ENCODE measurements at regions of chr12 and their contacts with region 1.

Region 1: GRCh38 chr12:3299929-3300832 is 190.8 kb upstream of the PRMT8 start:
- DNase-seq: peak; percentile 85 to 93
- H3K4me3 ChIP-seq: peak overlapping the region in 3 of 4 experiments; percentile 7 to 42 (median 11); a peak in 3 of 8 replicates
- H3K27ac ChIP-seq: no peak overlapping the region
- H3K4me1 ChIP-seq: peaks cover 0 to 13% (median 4%) of the 10 kb centered on the region in 4 experiments; a peak in 5 of 7 replicates
- H3K27me3 ChIP-seq: peaks cover 0 to 4% (median 2%) of the 10 kb centered on the region in 4 experiments; a peak in 2 of 7 replicates
- CTCF ChIP-seq: peak in 2 of 3 experiments; percentile 97 to 98; a peak in 3 of 4 replicates
- EP300 ChIP-seq: peak in 1 of 2 experiments; percentile 33; a peak in 1 of 3 replicates
- POLR2A ChIP-seq: no peak
- RAD21 ChIP-seq: peak; percentile 93 to 98

Region 2: DNA sequence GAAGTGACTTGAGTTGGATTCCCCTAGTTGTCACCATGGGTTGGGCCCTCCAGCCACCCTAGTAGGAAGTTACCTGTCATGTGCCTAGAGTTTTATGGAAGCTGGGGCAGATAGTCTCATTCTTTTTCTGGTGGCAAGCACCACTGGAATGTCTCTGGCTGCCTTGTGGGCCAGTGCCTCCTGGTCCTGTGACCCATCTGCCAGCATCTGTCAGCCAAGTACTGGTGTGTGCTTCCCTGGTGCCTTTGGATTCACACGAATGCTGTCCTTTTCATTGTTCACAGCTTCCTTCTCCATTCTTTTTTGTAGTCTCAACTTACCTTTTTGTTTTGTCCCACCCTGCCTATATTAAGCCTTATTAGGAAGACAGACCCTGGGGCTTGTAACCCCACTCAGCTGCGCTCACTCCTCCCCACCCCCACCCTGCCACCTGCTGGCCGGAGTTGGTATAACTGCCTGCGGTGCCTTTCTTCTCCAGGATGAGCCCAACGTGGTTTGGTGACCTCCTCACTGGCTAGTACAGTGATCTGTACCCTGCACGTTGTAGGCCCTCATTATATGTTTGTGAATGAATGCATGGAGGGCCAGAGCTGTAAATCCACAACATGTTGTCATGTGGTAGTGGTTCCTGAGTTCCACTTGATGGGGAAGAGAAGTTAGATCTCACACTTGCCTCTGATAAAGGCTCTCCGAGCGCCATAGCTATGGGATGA is 97.3 kb before region 1 on chr12:
- CTCF ChIA-PET with region 1: interaction called, 20 read pairs
- POLR2A ChIA-PET with region 1: no interaction called
- DNase-seq: peak in 1 of 2 experiments; percentile 93
- H3K4me3 ChIP-seq: no peak overlapping the region
- H3K27ac ChIP-seq: no peak overlapping the region
- H3K4me1 ChIP-seq: peaks cover 3 to 16% (median 10%) of the 10 kb centered on the region in 4 experiments
- H3K27me3 ChIP-seq: peaks cover 10 to 43% (median 32%) of the 10 kb centered on the region in 4 experiments
- CTCF ChIP-seq: peak; percentile 92 to 94 (median 93)
- EP300 ChIP-seq: no peak
- POLR2A ChIP-seq: no peak
- RAD21 ChIP-seq: peak; percentile 65 to 77

Region 3: DNA sequence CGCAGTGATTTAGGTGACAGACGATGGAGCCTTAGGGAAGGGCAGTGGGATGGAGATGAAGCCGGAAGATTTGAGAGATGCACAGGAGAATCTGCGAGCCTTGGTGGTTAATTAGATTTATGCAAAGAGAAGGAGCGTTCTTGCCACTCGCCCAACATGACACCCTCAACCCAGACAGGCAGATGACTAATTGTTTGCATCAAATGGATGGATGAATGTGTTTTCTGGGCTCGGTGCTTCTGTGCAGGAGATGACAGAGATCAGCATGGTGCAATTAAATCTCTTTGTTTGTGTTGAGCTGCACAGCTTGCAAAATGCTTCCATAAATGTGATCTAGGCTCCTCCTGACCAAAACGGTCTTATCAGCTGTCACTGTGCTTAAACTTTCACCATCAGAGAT is 11.5 kb before region 1 on chr12:
- CTCF ChIA-PET with region 1: interaction called, 66 read pairs
- POLR2A ChIA-PET with region 1: interaction called, 3 read pairs
- DNase-seq: no peak
- H3K4me3 ChIP-seq: no peak overlapping the region
- H3K27ac ChIP-seq: no peak overlapping the region
- H3K4me1 ChIP-seq: peaks cover 0 to 5% (median 2%) of the 10 kb centered on the region in 4 experiments; a peak in 4 of 7 replicates
- H3K27me3 ChIP-seq: no peaks in the 10 kb centered on the region
- CTCF ChIP-seq: no peak
- EP300 ChIP-seq: no peak
- POLR2A ChIP-seq: no peak
- RAD21 ChIP-seq: no peak

Region 4: DNA sequence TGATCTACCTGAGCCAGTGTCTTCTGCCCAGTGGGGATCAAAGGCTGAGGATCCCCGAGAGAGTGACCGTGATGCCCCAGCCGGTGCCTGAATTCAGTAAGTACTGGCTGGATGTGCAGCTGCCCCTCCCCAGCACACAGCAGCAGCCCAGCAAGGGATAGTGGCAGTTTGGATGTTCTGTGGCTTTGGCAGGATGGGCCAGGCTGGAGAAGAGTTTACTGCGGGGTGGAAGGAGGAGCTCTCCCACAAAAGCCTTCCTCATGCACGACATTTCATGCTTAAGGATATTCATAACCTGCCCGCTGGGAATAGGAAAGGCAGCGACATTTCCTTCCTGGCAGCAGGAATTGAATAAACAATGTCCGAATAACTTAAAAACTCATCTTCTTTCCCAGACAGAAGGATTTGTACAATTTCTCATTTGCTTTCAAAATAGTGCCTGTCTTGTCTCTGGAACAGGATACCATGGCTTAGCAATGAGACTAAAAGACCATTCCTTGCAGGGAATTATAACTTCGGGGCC is 55.3 kb after region 1 on chr12:
- CTCF ChIA-PET with region 1: interaction called, 12 read pairs
- POLR2A ChIA-PET with region 1: no interaction called
- DNase-seq: no peak
- H3K4me3 ChIP-seq: no peak overlapping the region
- H3K27ac ChIP-seq: no peak overlapping the region
- H3K4me1 ChIP-seq: no peaks in the 10 kb centered on the region; a peak in 1 of 7 replicates
- H3K27me3 ChIP-seq: no peaks in the 10 kb centered on the region
- CTCF ChIP-seq: no peak
- EP300 ChIP-seq: no peak
- POLR2A ChIP-seq: no peak
- RAD21 ChIP-seq: no peak

Region 5: GRCh38 chr12:3483089-3483488 is 182.9 kb after region 1 on chr12:
- CTCF ChIA-PET with region 1: interaction called, 12 read pairs
- POLR2A ChIA-PET with region 1: no interaction called
- DNase-seq: no peak
- H3K4me3 ChIP-seq: no peak overlapping the region
- H3K27ac ChIP-seq: no peak overlapping the region
- H3K4me1 ChIP-seq: peaks cover 0 to 5% (median 0%) of the 10 kb centered on the region in 4 experiments; a peak in 1 of 7 replicates
- H3K27me3 ChIP-seq: peaks cover 0 to 3% (median 1%) of the 10 kb centered on the region in 4 experiments; a peak in 4 of 7 replicates
- CTCF ChIP-seq: peak; percentile 16 to 42 (median 39); a peak in 3 of 4 replicates
- EP300 ChIP-seq: no peak
- POLR2A ChIP-seq: no peak
- RAD21 ChIP-seq: peak; percentile 18 to 34; a peak in 2 of 4 replicates

Region 6: GRCh38 chr12:3604748-3605586 is 304.8 kb after region 1 on chr12:
- CTCF ChIA-PET with region 1: interaction called, 22 read pairs
- POLR2A ChIA-PET with region 1: interaction called, 3 read pairs
- DNase-seq: peak; percentile 31 to 60
- H3K4me3 ChIP-seq: peak overlapping the region; percentile 10 to 53 (median 22); a peak in 6 of 8 replicates
- H3K27ac ChIP-seq: no peak overlapping the region
- H3K4me1 ChIP-seq: peaks cover 17 to 34% (median 29%) of the 10 kb centered on the region in 4 experiments
- H3K27me3 ChIP-seq: peaks cover 0 to 7% (median 2%) of the 10 kb centered on the region in 4 experiments; a peak in 4 of 7 replicates
- CTCF ChIP-seq: no peak
- EP300 ChIP-seq: no peak
- POLR2A ChIP-seq: no peak
- RAD21 ChIP-seq: no peak; a peak in 1 of 4 replicates

Region 7: DNA sequence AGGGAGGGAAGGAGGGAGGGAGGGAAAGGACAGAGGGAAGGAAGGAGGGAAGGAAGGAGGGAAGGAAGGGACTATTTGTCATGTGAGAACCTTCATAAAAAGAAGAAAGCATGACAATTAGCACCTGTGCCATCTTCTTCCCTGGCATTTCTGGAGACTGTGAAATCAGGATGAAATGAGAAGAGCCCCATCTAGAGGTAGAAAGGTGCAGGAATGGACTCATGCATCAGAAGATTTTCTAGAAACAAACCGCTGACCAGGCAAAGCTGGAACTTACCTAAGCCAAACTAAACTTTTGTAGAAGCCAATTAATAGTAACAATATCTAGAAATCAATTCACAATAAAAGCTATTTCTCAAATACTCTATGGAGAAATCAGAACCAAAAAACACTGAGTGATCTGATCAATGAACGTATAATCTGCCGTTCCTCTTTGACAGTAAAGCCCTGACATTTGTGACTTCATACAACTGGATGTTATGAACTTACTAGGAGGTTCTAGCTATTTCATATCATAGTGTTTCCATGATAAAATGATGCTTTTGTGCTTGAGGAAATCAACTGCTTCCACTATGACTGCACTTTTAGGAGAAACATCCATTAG is 477.1 kb after region 1 on chr12:
- CTCF ChIA-PET with region 1: interaction called, 57 read pairs
- POLR2A ChIA-PET with region 1: no interaction called
- DNase-seq: no peak
- H3K4me3 ChIP-seq: no peak overlapping the region
- H3K27ac ChIP-seq: no peak overlapping the region
- H3K4me1 ChIP-seq: peaks cover 0 to 4% (median 0%) of the 10 kb centered on the region in 4 experiments; a peak in 1 of 7 replicates
- H3K27me3 ChIP-seq: no peaks in the 10 kb centered on the region
- CTCF ChIP-seq: peak in 2 of 3 experiments; percentile 76; a peak in 3 of 4 replicates
- EP300 ChIP-seq: no peak
- POLR2A ChIP-seq: no peak
- RAD21 ChIP-seq: peak; percentile 92

Measured in H1 (cell line).